ENCODE measurements at regions of chr3 and their contacts with region 1.

Region 1: DNA sequence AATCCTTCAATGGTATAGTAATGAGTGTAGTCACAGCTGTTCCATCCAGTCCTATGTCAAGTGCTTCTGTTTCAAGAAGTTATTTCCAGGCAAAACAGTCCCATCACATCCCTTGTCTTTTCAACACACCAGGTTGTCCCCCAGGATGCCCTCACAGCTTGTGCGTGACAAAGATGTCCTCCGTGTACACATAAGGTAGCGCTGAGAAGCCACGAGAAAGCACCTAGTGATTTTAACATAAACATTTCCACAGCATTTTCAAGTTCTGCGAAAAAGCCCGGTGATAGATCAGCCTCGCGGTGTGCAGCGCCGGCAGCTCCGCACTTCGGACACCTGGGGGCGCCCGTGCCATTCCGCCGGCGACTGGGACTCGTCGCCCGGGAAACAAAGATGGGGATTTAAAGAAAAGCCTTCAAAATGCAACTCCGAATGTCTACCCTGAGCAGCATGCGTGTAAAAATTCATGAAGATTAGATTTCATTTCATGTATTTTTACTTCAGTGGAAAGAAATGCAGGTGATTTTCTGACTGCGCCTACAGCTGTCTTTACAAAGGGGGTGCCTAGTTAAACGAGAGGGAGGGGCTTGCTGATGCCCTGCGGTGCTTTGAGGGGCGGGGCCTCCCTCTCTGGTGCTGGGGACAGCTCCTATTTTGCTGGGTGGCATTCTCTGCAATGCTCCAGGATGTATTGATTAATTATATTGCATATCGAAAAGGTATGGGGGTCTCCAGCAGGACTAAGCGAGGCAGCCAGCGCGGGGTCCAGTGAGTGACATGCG is 49.9 kb downstream of the KY start:
- DNase-seq: peak; percentile 67
- ATAC-seq: peak; percentile 89
- H3K4me3 ChIP-seq: no peak overlapping the region; the same call in 1 of the 2 replicates
- H3K27ac ChIP-seq: no peak overlapping the region
- H3K4me1 ChIP-seq: peaks cover 8% of the 10 kb centered on the region
- H3K27me3 ChIP-seq: no peaks in the 10 kb centered on the region
- CTCF ChIP-seq: peak; percentile 93

Region 2: GRCh38 chr3:134640872-134641470 is 40.1 kb after region 1 on chr3:
- CTCF ChIA-PET with region 1: no interaction called
- POLR2A ChIA-PET with region 1: no interaction called
- intact Hi-C with region 1: loop called (anchors 2 kb)
- DNase-seq: peak; percentile 22
- ATAC-seq: no peak
- H3K4me3 ChIP-seq: no peak overlapping the region
- H3K27ac ChIP-seq: no peak overlapping the region
- H3K4me1 ChIP-seq: no peaks in the 10 kb centered on the region
- H3K27me3 ChIP-seq: no peaks in the 10 kb centered on the region
- CTCF ChIP-seq: peak; percentile 58

Region 3: DNA sequence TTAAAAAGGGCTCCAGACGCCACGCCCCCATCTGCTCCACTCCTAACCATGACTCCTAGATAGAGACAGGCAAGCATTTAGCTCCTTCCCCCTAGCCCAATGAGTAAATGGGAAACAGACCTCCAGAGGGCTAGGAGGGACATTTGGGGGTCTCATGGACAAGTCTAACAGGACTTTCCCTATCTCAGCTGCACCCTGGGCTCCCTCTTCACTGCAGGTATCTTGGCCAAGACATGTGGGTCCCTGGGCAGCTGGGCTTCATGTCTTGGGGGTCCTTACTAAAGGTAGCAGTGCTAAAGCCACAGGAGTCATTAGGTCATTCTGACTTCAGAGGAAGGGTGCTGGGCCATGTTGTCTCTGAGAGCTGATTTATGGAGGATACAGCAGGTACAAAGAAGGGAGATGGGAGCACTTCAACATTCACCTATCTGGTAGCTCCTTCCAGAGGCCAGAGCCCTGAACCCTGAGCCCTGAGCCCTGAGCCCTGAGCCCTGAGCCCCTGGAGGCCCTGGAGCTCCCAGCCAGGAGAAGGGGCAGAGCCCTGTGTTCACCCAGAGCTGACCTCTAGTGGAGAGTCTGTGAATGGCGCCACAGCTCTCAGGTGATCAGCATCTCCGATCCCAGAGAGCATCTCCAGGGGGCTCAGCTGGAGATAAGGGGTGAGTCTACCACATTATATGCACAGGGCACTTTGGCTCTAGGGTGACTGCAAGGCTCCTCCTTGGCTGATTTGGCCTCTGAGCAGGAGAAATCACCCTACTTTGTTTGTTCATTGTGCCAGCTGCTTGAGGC is 154.1 kb after region 1 on chr3:
- CTCF ChIA-PET with region 1: no interaction called
- POLR2A ChIA-PET with region 1: no interaction called
- intact Hi-C with region 1: loop called (anchors 5 kb)
- DNase-seq: peak; percentile 61
- ATAC-seq: peak; percentile 61; the same call in 1 of the 2 replicates
- H3K4me3 ChIP-seq: no peak overlapping the region
- H3K27ac ChIP-seq: no peak overlapping the region
- H3K4me1 ChIP-seq: no peaks in the 10 kb centered on the region
- H3K27me3 ChIP-seq: 0 out of 2 replicates have a peak, but pooled peaks cover 6% of the 10 kb centered on the region
- CTCF ChIP-seq: peak; percentile 67

Region 4: DNA sequence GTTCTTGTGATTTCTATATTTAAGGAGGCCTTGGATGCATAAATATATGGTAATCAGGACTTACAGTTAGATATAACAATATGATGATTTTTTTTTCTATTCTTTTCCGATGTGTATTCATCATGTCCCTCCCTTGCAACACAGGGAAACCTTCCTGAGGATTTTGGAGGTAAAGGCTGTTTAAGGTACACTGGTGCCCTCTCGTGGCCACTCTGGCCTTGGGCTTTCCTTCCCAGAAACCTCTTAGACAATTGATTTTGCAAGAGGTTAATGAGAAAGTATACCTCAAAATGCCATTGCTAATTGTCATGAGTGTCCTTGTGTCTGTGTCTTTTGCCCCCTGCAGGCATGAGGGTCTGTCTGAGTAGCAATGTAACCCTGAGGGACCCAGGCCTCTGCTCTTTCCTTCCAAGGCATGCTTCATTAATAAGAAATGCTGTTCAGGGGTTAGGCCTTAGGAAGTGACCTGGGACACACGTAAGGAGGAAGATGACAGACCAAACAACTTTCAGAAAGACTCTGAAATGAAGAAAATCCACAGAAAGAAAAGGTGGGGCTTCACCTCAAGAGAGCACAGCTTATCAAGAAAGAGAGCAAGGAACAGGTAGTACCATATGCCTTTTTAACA is 1294.3 kb after region 1 on chr3:
- CTCF ChIA-PET with region 1: no interaction called
- POLR2A ChIA-PET with region 1: no interaction called
- intact Hi-C with region 1: loop called (anchors 1 kb)
- DNase-seq: peak; percentile 83
- ATAC-seq: peak; percentile 74
- H3K4me3 ChIP-seq: no peak overlapping the region
- H3K27ac ChIP-seq: no peak overlapping the region
- H3K4me1 ChIP-seq: peaks cover 28% of the 10 kb centered on the region
- H3K27me3 ChIP-seq: no peaks in the 10 kb centered on the region
- CTCF ChIP-seq: peak; percentile 92

Measured in PC-3 (cell line).